Posterior vena cava (tissue), 2 donors: ENCODE measurements at regions of chr9 and their contacts with region 1.

Region 1: DNA sequence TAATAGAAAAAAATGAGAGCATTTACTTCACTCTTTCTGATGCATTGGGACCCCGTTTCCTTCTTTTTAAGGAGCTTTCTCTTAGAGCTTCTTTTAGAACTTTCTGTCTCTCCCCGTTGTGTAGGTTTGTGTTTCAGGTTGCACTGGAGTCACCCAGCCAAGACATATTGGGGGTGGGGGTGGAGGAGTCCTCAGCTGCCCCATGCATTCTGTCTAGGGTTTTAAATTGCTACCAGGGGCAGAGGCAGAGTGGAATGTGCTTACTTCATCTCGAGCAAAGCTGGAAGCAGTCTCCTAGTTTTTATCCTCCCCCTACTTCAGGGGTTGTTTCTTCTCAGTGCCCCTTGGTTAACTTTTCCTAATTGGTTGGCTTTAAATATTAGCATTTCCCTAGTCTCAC is 9.4 kb downstream of the OR2K2 start:
- DNase-seq: no peak

Region 2: DNA sequence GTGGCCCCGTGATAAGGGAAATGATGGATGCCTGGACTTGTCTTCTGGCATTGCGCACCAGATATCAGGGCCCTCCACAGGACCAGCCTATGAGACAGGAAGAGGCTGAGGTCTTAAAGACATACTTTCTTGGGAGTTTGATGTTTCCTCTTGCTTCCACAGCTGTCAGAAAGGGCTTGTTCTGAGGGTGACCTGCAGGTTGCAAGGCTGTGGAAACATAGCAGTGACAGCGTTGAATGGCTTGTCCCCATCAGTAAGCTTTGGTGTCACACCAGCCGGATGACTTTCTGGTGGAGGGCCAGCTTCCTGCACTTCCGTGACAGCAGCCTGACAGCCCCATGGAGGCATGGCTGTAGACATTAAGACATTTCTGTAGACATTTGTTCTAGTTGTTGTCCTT is 1255.8 kb before region 1 on chr9:
- intact Hi-C with region 1: loop called in 1 of 2 experiments (anchors 5 kb)
- DNase-seq: no peak